GM13976 (cell line): ENCODE measurements at regions of chr7 and their contacts with region 1.

Region 1: DNA sequence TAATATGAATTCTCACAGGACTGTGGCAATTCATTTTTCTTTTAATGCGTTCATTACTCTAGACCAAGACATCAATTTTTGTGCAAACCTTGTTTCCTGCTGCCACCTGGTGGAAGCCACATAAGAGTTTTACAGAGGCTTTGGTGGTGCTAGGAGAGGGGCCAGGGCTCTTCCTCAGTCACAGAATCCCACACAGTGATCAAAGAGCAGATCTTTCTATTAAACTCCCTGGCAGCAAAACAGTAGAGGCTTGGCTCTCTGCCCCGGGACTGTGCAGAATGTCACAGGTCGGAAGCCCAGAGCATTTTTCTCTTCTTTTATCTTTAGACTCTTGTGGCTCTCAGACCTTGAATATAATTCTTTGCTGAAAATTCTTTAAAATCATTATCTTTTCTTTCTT is 506.4 kb upstream of the C7orf33 start:
- DNase-seq: no peak
- CTCF ChIP-seq: peak; percentile 42

Region 2: GRCh38 chr7:147245292-147245691 is 838.8 kb before region 1 on chr7:
- in situ Hi-C with region 1: loop called (anchors 25 kb)
- DNase-seq: peak; percentile 38
- CTCF ChIP-seq: peak; percentile 78

Region 3: GRCh38 chr7:148021507-148022045 is 62.6 kb before region 1 on chr7:
- in situ Hi-C with region 1: no loop called
- DNase-seq: no peak
- CTCF ChIP-seq: no peak